ENCODE measurements at regions of chr2 and their contacts with region 1.

Region 1: DNA sequence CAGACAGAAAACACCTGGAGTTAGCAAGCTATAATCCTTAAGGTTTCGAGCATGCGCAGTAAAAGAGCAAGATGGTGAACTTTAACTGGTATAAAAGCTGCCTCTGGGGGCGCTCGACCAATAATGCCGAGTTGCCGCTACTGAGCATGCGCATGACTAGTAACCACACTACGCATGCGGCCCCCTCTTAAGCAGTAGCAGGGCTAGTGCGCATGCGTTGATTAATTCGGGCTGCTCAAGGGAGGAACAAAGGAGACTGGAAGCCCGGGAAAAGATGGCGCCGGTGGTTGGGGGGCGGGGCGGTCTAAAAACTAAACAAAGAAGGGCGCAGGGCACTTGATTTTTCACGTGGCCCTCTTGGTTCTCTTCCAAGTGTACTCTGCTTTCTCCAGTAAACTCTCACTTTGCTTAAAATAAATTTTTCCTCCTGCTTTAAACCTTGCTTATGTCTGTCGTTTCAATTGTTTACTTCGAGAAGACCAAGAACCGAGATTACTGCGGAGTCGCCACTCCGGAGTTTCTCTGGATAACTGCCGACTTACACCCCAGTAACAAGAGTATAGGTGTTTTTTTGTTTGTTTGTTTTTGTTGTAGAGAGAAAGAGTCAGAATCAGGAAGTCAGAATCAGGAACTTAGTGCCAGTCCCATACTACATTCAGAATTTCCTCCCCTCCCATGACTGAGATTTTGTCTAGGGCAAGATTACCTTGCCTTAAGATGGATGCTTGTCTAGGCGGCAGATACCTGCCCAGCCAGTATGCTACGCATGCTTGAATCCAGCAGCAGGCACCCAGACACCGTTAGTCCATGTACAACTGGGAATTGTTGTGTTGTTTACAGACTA is 5.8 kb downstream of the XRCC5 start:
- DNase-seq: peak; percentile 93 to 99
- ATAC-seq: peak; percentile 96 to 99 (median 98)
- H3K4me3 ChIP-seq: peak overlapping the region; percentile 11 to 60 (median 54)
- H3K27ac ChIP-seq: peak overlapping the region; percentile 31 to 91 (median 80)
- H3K4me1 ChIP-seq: peaks cover 3 to 89% (median 46%) of the 10 kb centered on the region in 9 donors
- H3K27me3 ChIP-seq: no peaks in the 10 kb centered on the region
- CTCF ChIP-seq: peak; percentile 77 to 96 (median 88)

Region 2: GRCh38 chr2:215904101-215904500 is 210.8 kb before region 1 on chr2:
- intact Hi-C with region 1: no loop called
- DNase-seq: no peak
- ATAC-seq: peak in 1 of 8 donors; percentile 70
- H3K4me3 ChIP-seq: no peak overlapping the region
- H3K27ac ChIP-seq: peak overlapping the region in 1 of 10 donors; percentile 59
- H3K4me1 ChIP-seq: peaks cover 0 to 45% (median 0%) of the 10 kb centered on the region in 9 donors
- H3K27me3 ChIP-seq: no peaks in the 10 kb centered on the region
- CTCF ChIP-seq: no peak

Region 3: DNA sequence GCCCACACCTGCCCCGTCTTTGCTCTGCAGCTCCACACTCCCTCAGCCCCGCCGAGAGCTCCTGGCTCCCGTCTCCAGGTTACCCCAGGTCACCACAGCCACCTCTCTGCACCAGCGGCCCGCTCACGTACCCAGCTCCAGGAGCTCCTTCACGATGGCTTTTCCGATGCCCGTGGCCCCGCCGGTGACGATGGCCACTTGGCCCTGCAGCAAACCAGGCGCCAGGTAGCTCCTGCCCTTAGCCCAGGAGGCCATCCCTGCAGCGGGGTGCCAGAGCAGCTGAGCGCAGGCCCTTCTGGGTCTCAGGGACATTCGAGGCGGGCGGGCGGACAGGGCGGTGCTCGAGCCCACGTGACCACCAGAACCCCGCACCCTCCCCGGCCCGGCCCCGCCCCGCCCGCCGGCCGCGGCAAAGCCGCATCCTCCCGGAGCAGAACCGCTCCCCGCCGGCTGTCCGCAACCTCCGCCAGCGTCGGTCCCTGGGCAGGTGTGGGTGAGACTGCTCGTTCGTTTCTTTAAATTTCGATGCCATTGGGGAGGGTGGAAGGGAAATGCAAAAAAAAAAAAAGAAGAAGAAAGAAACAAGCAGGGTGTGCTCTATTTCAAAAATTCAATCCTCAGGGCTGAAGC is 33.3 kb before region 1 on chr2 and contains the starts of genes PECR and TMEM169:
- intact Hi-C with region 1: loop called in 1 of 10 experiments (anchors 2 kb)
- DNase-seq: peak; percentile 72 to 84
- ATAC-seq: peak; percentile 97 to 99 (median 99)
- H3K4me3 ChIP-seq: peak within 1 kb of the TSS; percentile 51 to 79 (median 68)
- H3K27ac ChIP-seq: peak within 1 kb of the TSS in 7 of 10 donors; percentile 17 to 74 (median 32)
- H3K4me1 ChIP-seq: peaks cover 0 to 34% (median 16%) of the 10 kb centered on the region in 9 donors
- H3K27me3 ChIP-seq: no peaks in the 10 kb centered on the region
- CTCF ChIP-seq: no peak
- total RNA-seq, gene PECR: 3.3 to 6.6 (median 4.1) TPM
- total RNA-seq, gene TMEM169: 0.11 to 0.97 (median 0.23) TPM in 8 of 10 donors, not detected in the others